PC-3 (cell line): ENCODE measurements at regions of chr5 and their contacts with region 1.

Region 1: GRCh38 chr5:75053304-75054133 is 1.2 kb upstream of the GCNT4 start:
- DNase-seq: peak; percentile 55
- ATAC-seq: peak; percentile 46
- H3K4me3 ChIP-seq: peak overlapping the region; percentile 79
- H3K27ac ChIP-seq: no peak overlapping the region
- H3K4me1 ChIP-seq: no peaks in the 10 kb centered on the region
- H3K27me3 ChIP-seq: no peaks in the 10 kb centered on the region
- CTCF ChIP-seq: peak; percentile 13; the same call in 1 of the 2 replicates

Region 2: DNA sequence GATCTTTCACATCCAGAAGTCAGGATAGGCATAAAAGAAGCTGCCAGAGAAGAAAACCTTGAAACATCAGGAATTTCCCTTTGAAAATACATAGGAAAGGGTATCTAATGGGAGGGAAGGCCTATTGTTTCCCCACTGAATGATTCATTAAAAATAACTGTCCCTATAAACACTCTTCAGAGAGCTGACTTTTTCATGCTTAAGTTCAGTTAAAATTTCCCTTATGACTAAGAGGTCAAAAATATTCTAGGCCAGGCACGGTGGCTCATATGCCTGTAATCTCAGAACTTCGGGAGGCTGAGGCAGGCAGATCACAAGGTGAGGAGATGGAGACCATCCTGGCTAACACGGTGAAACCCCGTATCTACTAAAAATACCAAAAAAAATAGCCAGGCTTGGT is 912.5 kb before region 1 on chr5:
- CTCF ChIA-PET with region 1: no interaction called
- POLR2A ChIA-PET with region 1: no interaction called
- intact Hi-C with region 1: no loop called
- DNase-seq: peak; percentile 53
- ATAC-seq: peak; percentile 79
- H3K4me3 ChIP-seq: no peak overlapping the region
- H3K27ac ChIP-seq: peak overlapping the region; percentile 45
- H3K4me1 ChIP-seq: peaks cover 19% of the 10 kb centered on the region
- H3K27me3 ChIP-seq: no peaks in the 10 kb centered on the region
- CTCF ChIP-seq: no peak

Region 3: DNA sequence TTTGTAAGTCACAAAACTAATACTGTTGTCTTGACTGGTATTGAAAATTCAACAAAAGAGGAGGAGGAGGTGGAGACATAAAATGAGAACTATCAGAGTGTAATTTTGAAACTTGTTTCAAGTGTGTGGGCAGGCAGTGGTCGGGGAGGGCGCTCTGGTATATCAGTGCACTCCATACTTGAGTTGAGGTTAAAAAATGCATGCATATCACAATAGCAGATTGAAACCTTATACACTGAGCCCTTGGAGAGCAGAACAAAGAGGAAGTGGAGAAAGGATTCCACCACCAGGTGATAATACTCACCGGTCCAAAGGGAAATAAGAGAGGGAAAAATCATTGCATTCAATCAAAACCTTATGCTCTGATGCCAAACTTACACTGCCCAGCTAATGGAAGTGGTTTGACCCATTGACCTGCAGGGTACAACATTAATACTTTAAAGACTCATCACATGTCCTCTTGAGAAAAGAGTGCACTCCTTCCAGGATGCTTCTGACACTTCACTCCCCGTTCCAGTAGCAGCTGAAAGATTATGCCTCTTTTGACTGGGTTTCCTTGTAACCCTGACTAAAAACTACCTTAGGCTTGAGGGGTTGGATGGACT is 107.9 kb before region 1 on chr5:
- CTCF ChIA-PET with region 1: interaction called, 3 read pairs
- POLR2A ChIA-PET with region 1: no interaction called
- intact Hi-C with region 1: loop called (anchors 5 kb)
- DNase-seq: no peak
- ATAC-seq: no peak
- H3K4me3 ChIP-seq: no peak overlapping the region
- H3K27ac ChIP-seq: no peak overlapping the region
- H3K4me1 ChIP-seq: peaks cover 22% of the 10 kb centered on the region
- H3K27me3 ChIP-seq: no peaks in the 10 kb centered on the region
- CTCF ChIP-seq: no peak

Region 4: GRCh38 chr5:75236322-75237316 is 183.1 kb after region 1 on chr5 and contains the start of gene ANKRD31:
- CTCF ChIA-PET with region 1: no interaction called
- POLR2A ChIA-PET with region 1: no interaction called
- intact Hi-C with region 1: loop called (anchors 10 kb)
- DNase-seq: peak; percentile 74
- ATAC-seq: peak; percentile 98
- H3K4me3 ChIP-seq: peak within 1 kb of the TSS; percentile 88
- H3K27ac ChIP-seq: no peak within 1 kb of the TSS
- H3K4me1 ChIP-seq: peaks cover 19% of the 10 kb centered on the region
- H3K27me3 ChIP-seq: no peaks in the 10 kb centered on the region
- CTCF ChIP-seq: peak; percentile 64
- total RNA-seq, gene ANKRD31: 0.12 and 0.26 TPM in 2 replicates

Region 5: GRCh38 chr5:75265731-75266130 is 212.2 kb after region 1 on chr5:
- CTCF ChIA-PET with region 1: no interaction called
- POLR2A ChIA-PET with region 1: no interaction called
- intact Hi-C with region 1: loop called (anchors 2 kb)
- DNase-seq: peak; percentile 56
- ATAC-seq: peak; percentile 33; the same call in 1 of the 2 replicates
- H3K4me3 ChIP-seq: no peak overlapping the region
- H3K27ac ChIP-seq: no peak overlapping the region
- H3K4me1 ChIP-seq: no peaks in the 10 kb centered on the region
- H3K27me3 ChIP-seq: no peaks in the 10 kb centered on the region
- CTCF ChIP-seq: peak; percentile 64

Region 6: GRCh38 chr5:75381456-75381855 is 327.9 kb after region 1 on chr5:
- CTCF ChIA-PET with region 1: no interaction called
- POLR2A ChIA-PET with region 1: no interaction called
- intact Hi-C with region 1: no loop called
- DNase-seq: no peak
- ATAC-seq: no peak
- H3K4me3 ChIP-seq: no peak overlapping the region
- H3K27ac ChIP-seq: no peak overlapping the region
- H3K4me1 ChIP-seq: no peaks in the 10 kb centered on the region; the same call in 1 of the 2 replicates
- H3K27me3 ChIP-seq: no peaks in the 10 kb centered on the region
- CTCF ChIP-seq: no peak